SK-N-SH (cell line): ENCODE measurements at regions of chr2 and their contacts with region 1.

Region 1: DNA sequence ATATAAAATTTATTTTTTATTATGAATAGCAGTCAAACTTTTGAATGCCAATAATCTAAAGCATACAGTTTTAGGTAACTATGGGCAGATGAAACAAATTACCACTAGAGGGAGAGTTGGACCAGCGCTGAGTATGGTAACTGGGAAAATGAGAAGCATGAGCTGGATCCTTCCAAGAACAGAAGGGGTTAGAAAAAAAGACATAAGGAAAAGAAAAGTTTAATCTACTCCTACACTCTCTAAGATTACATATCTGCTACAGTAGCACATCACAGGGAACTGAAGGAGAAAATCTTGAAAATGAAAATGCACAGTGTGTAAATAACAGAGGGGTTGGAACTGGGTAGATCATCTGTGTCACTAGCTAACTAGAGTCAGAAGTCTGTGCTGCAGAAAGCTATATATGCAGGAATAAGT is 15.5 kb downstream of the REG3G start:
- DNase-seq: peak; percentile 19
- H3K4me3 ChIP-seq: no peak overlapping the region
- H3K27ac ChIP-seq: no peak overlapping the region
- H3K4me1 ChIP-seq: peaks cover 0 to 3% of the 10 kb centered on the region in 2 experiments; a peak in 1 of 4 replicates
- H3K27me3 ChIP-seq: no peaks in the 10 kb centered on the region
- CTCF ChIP-seq: no peak; the same call in 1 of the 2 replicates
- EP300 ChIP-seq: no peak
- RAD21 ChIP-seq: peak; percentile 73

Region 2: DNA sequence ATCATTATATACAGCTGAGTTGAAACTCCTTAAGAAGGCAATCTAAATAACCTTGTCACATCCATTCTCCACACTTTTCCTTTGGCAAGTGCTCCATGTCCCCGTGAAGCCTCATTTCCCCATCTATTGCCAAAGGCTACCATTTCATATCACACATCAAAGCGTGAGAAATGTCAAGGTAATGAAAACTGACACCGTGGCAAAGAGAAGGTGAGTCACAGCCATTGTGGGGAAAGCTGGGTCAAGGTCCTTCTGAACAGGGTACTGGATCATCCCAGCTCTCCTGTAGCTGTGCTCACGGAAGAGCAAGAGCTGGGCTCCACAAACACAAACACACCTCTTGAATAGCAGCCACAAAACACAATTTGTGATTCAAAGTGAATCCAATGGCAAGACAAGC is 73.7 kb before region 1 on chr2:
- CTCF ChIA-PET with region 1: no interaction called
- POLR2A ChIA-PET with region 1: no interaction called
- DNase-seq: no peak
- H3K4me3 ChIP-seq: no peak overlapping the region
- H3K27ac ChIP-seq: no peak overlapping the region
- H3K4me1 ChIP-seq: no peaks in the 10 kb centered on the region; a peak in 1 of 4 replicates
- H3K27me3 ChIP-seq: no peaks in the 10 kb centered on the region
- CTCF ChIP-seq: no peak
- EP300 ChIP-seq: no peak
- RAD21 ChIP-seq: no peak

Region 3: DNA sequence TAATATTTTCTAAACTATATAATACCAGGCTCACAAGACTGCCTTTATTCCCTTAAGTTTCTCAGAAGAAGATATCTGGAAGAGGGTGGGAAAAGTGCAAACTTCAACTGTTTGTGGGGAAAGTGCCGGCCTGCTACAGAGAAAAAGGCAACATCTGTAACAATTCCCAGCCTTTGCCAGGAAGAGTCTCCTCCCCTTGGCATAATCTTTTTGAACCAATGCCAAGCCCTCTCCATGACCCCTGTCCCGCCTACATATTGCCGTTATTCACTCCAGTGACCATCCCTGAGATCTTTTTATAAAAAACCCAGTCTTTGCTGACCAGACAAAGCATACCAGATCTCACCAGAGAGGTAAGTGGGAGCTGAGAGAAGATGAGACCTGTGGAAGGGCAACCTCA is 15.6 kb before region 1 on chr2 and contains the start of gene REG3G:
- CTCF ChIA-PET with region 1: interaction called, 17 read pairs
- POLR2A ChIA-PET with region 1: no interaction called
- DNase-seq: no peak
- H3K4me3 ChIP-seq: no peak within 1 kb of the TSS
- H3K27ac ChIP-seq: no peak within 1 kb of the TSS
- H3K4me1 ChIP-seq: peaks cover 0 to 4% of the 10 kb centered on the region in 2 experiments; a peak in 1 of 4 replicates
- H3K27me3 ChIP-seq: no peaks in the 10 kb centered on the region
- CTCF ChIP-seq: no peak
- EP300 ChIP-seq: no peak
- RAD21 ChIP-seq: no peak
- polyA plus RNA-seq, gene REG3G: not detected in 2 replicates

Region 4: GRCh38 chr2:79083597-79084273 is 42.7 kb after region 1 on chr2:
- CTCF ChIA-PET with region 1: no interaction called
- POLR2A ChIA-PET with region 1: no interaction called
- DNase-seq: peak; percentile 7
- H3K4me3 ChIP-seq: no peak overlapping the region
- H3K27ac ChIP-seq: no peak overlapping the region
- H3K4me1 ChIP-seq: peaks cover 0 to 3% of the 10 kb centered on the region in 2 experiments; a peak in 2 of 4 replicates
- H3K27me3 ChIP-seq: no peaks in the 10 kb centered on the region
- CTCF ChIP-seq: no peak
- EP300 ChIP-seq: no peak
- RAD21 ChIP-seq: no peak

Region 5: GRCh38 chr2:79210274-79210917 is 169.4 kb after region 1 on chr2:
- CTCF ChIA-PET with region 1: interaction called, 25 read pairs
- POLR2A ChIA-PET with region 1: no interaction called
- DNase-seq: no peak
- H3K4me3 ChIP-seq: no peak overlapping the region
- H3K27ac ChIP-seq: no peak overlapping the region
- H3K4me1 ChIP-seq: no peaks in the 10 kb centered on the region
- H3K27me3 ChIP-seq: no peaks in the 10 kb centered on the region
- CTCF ChIP-seq: no peak
- EP300 ChIP-seq: no peak
- RAD21 ChIP-seq: no peak

Region 6: DNA sequence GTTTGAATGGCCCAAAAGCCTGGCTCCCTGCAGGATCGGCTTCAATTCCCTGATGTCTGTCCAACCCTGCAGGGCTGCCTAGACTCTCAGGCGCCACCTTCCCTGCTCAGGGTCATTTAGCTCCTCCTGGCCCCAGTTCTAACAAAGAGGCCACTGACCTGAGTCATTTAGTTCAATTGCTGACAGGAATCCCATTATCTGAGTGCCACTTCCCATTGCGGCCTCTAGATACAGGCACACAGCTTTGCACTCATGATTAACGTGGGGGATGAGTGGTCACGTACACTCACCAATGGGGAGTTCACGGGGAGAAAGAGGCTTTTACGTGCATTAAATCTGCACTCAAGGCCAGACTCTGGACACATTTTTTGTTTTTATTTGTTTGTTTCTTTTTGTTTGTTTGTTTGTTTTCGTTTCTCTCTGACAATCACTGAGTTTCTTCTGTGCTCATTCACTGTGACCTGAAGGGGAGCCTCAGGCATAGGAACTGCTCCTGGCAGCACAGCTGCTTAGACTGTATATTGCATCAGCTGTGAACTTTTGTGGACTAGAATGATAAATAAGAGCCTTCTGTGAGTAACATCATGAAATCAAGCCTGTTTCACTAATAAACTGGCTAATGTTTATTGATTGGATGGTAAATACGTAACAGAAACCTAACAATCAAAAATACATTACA is 352.9 kb after region 1 on chr2:
- CTCF ChIA-PET with region 1: no interaction called
- POLR2A ChIA-PET with region 1: no interaction called
- DNase-seq: no peak
- H3K4me3 ChIP-seq: no peak overlapping the region
- H3K27ac ChIP-seq: no peak overlapping the region
- H3K4me1 ChIP-seq: no peaks in the 10 kb centered on the region
- H3K27me3 ChIP-seq: no peaks in the 10 kb centered on the region
- CTCF ChIP-seq: no peak
- EP300 ChIP-seq: no peak
- RAD21 ChIP-seq: no peak